Posterior cingulate gyrus (tissue), 11 donors: ENCODE measurements at regions of chr4 and their contacts with region 1.

Region 1: DNA sequence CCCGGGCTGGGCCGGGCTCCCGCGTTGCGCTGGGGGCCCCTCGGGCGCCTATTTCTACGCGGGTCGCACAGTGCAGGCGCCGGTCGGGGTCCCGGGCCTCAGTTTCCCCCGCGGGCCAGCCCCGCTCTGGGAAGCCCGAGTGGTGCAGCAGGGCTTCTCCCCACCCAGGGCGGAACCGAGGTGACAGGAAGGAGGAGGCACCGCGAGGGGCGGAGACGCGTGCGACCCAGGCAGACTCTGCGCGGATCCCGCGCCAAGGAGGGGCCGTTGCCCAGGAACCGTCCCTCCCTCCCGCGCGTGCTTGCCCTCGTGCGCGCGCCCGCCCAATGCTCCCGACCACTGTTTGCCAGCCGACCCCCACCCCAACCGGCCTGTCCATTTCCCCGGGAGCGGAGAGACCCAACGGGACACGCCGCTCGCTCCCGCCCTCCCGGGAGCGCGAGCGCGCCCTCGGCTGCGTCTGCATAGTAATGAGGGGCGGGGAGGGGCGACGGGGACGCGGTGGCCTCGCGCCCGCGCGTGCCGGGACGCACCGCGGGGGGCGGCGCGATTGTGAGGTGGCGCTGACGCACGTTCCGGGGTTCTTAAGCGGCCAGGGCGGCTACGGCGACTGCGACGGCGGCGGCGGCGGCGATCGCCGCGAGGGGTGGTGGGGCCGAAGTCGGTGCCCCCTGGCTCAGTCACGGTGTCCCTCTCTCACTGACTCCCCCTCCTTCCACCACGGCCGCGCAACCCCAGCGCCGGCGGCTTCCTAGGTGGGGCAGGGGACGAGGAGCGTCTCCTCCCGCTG is at the start of gene CPEB2:
- DNase-seq: peak; percentile 89 to 99 (median 94)

Region 2: GRCh38 chr4:14100349-14100748 is 901.7 kb before region 1 on chr4:
- intact Hi-C with region 1: no loop called
- DNase-seq: no peak

Region 3: GRCh38 chr4:14864365-14865030 is 137.6 kb before region 1 on chr4:
- intact Hi-C with region 1: loop called (anchors 5 kb)
- DNase-seq: no peak

Region 4: DNA sequence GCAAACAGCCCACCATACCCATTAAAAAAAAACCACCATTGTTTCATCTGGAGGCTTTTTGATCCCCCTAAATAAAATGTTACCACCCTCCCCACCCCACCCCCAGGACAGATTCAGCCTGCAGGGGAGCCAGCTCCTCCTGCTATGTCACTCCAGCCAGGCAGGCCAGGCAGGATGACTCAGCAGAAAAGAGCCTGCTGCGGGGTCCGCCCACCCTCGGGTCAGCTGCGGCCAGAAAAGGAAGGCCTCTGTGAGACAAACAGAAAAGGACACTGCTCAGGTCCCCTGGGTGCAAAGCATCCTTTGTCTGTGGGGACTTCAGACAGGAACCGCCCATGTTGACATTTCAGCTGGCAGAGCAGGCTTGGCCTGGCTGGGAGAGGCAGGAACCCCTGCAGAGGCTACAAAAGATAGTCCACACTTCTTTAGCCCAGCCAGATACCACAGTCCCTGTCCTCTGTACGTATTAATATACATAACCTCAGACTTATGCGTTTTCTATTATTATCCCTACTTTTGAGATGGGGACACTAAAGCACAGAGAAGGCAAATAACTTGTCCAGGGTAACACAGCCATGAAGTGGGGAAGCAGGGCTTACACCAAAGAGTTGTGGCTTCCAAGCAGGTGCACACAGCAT is 147.9 kb after region 1 on chr4:
- intact Hi-C with region 1: loop called (anchors 5 kb)
- DNase-seq: peak; percentile 80 to 98 (median 88)

Region 5: GRCh38 chr4:15469402-15470127 is 467.5 kb after region 1 on chr4 and contains the start of gene CC2D2A:
- intact Hi-C with region 1: loop called (anchors 5 kb)
- DNase-seq: peak in 5 of 10 donors; percentile 10 to 77 (median 46)

Region 6: DNA sequence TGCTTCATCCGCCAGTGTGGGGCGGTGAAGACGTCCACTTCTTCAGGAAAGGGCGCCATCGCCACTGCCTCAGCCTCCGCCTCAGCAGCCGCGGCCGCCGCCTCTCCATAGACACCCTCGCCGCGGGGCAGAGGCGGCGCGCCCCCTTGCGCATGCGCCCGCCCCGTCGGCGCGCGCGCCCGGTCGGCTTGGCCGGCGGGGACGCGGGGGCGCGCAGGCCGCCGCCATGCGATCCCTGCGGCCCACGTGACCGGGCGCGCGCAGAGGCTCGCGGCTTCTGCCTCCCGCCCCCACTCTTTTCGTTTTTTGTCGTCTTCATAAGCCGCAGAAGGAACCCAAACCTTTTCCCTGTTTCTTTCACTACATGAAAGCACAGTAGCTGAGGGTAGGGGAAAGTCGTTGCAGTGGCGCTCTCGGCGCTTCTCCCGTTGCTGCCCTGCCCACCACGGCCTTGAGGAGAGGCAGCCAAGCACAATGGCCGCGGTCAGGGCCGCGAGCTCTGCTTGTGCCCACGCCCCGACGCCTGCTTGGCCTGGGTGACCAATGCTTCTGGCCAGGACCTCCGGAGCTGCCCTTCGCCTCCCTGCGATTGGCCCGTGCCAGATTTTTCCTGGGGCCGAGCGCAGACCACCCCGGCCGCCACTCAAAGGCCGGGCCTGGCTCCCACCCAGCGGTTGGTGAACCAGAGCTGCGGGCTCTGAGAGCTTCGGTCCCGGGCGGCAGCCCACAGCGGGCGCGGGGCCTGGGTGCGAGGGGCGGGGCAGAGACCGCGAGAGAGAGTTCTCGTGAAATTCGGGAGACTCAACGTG is 653.4 kb after region 1 on chr4 and contains the start of gene FBXL5:
- intact Hi-C with region 1: loop called (anchors 10 kb)
- DNase-seq: peak; percentile 52 to 97 (median 71)